HEK293T (cell line): ENCODE measurements at regions of chr17 and their contacts with region 1.

Region 1: DNA sequence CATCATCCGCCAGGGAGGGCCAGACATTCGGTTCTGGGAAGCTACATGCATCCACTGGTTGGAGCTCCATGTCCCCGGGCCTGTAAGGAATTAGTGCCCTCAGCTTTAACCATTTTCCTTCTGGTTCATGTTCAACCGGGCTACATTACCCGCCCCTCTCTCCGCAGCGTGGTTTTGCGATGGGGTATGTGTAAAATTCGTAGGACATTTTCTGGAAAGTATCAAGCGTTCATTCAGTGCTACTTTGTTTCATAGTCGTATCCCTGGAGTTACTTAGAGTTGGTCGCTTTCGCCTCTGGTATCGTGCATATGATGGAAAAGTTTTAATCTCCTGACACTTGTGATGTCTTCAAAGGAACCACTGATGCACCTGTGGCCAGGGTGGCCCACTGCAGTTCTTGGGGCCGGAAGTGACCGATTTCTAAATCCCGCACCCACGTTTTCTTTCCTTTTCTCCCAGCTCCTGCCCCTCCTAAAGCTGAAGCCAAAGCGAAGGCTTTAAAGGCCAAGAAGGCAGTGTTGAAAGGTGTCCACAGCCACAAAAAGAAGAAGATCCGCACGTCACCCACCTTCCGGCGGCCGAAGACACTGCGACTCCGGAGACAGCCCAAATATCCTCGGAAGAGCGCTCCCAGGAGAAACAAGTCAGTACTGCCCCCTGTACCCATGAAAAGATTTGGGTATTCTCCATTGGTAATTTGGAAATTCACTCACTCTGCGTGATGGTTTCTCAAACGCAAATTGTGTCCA is 637 bp downstream of the RPL23A start:
- DNase-seq: no peak

Region 2: GRCh38 chr17:28661635-28662537 is 58.5 kb before region 1 on chr17 and contains the starts of genes SDF2 and SUPT6H:
- CTCF ChIA-PET with region 1: no interaction called
- POLR2A ChIA-PET with region 1: interaction called, 29 read pairs
- DNase-seq: peak; percentile 89

Region 3: DNA sequence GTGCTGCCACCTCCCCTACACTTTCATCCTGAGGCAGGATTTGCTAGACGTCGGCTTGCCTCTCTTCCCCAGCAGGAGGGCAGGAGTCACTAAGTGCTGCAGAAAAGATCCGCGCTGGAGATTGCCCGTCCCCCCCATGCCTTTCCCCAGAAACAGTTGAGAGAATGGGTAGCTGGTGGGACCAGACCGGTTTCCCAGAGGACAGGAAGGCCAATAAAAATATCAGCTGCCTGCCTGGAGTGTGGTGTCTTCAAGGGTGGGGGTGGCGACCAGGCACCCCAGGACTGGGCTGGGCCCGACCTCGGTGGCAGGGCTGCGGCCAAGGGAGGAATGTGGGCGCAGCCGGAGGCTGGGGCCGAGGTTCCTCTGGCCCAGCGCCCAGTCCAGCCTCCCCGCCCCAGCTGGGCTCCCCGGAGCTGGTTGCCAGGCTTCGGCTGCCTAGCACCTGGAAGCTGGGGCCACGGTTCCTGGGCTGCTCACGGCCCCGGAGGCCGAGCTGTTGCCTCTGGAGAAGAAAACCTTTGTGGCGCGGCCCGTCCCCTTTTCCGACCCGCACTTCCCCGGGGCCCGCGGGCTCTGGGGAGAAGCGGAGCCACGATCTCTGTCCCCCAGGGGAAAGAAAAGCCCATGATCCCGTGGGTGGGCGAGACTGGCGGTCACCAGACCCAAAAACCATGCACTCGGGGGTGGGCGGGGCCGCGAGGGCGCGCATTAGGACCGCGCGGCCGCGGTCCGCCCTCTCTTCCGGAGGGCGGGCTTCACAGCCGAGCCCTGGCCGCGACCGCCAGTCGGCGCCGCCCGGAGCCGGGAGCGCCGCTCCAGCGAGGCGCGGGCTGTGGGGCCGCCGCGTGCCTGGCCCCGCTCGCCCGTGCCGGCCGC is 23.0 kb after region 1 on chr17 and contains the start of gene TRAF4:
- CTCF ChIA-PET with region 1: interaction called, 185 read pairs
- POLR2A ChIA-PET with region 1: interaction called, 409 read pairs
- DNase-seq: peak; percentile 75

Region 4: DNA sequence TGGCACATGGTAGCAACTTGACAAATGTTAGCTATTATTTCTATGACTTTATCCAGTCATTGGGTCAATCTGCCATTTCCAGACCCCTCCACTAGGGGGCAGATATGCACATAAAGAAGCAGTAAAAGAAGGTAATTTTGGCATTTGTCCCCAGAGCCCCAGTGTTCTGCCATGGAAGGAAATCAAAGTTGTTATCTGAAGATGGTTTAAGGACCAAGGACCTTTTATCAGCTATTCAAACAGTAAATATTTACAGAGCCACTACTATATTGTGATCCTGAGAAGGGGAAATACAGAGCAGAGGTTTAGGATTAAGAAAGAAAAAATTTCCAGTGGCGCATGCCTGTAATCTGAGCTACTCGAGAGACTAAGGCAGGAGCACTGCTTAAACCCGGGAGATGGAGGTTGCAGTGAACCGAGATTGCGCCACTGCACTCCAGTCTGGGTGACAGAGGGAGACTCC is 43.4 kb after region 1 on chr17:
- CTCF ChIA-PET with region 1: interaction called, 3 read pairs
- POLR2A ChIA-PET with region 1: interaction called, 56 read pairs
- DNase-seq: peak; percentile 40

Region 5: GRCh38 chr17:28951991-28952975 is 231.9 kb after region 1 on chr17:
- CTCF ChIA-PET with region 1: interaction called, 5 read pairs
- POLR2A ChIA-PET with region 1: interaction called, 61 read pairs
- DNase-seq: peak; percentile 82